Caco-2 (cell line): ENCODE measurements at regions of chr4 and their contacts with region 1.

Region 1: GRCh38 chr4:37542706-37543105 is 143.5 kb downstream of the RELL1 start:
- DNase-seq: no peak
- H3K4me3 ChIP-seq: no peak overlapping the region
- H3K4me3 Mint-ChIP-seq: peak overlapping the region; percentile 3
- H3K27ac Mint-ChIP-seq: peak overlapping the region; percentile 13
- H3K4me1 ChIP-seq: peaks cover 60% of the 10 kb centered on the region
- H3K4me1 Mint-ChIP-seq: peaks cover 33% of the 10 kb centered on the region
- H3K27me3 ChIP-seq: no peaks in the 10 kb centered on the region
- H3K27me3 Mint-ChIP-seq: no peaks in the 10 kb centered on the region
- CTCF ChIP-seq: no peak

Region 2: DNA sequence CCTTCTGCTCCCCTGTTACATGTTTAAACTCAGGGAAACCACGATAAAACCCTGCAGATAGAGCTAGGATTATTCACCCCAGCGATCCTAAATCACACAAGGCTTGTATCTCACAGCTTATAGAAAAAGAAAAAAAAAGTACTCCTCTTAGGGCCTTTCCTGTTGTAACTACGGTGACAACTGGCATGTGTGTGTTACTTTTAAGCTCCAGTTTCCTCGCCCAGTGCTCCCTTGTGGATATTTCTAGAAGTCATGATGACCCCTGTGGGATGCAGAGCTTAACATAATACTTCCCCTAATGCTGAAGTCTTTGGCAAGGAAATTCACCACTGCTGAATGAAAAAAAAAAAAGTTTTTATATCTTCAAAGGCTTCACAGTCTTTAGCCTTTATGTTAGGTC is 183.4 kb before region 1 on chr4:
- CTCF ChIA-PET with region 1: no interaction called
- POLR2A ChIA-PET with region 1: no interaction called
- intact Hi-C with region 1: no loop called
- DNase-seq: no peak
- H3K4me3 ChIP-seq: no peak overlapping the region
- H3K4me3 Mint-ChIP-seq: no peak overlapping the region
- H3K27ac Mint-ChIP-seq: no peak overlapping the region
- H3K4me1 ChIP-seq: no peaks in the 10 kb centered on the region
- H3K4me1 Mint-ChIP-seq: peaks cover 11% of the 10 kb centered on the region
- H3K27me3 ChIP-seq: no peaks in the 10 kb centered on the region
- H3K27me3 Mint-ChIP-seq: no peaks in the 10 kb centered on the region
- CTCF ChIP-seq: no peak

Region 3: GRCh38 chr4:37434469-37434868 is 108.2 kb before region 1 on chr4:
- CTCF ChIA-PET with region 1: no interaction called
- POLR2A ChIA-PET with region 1: no interaction called
- intact Hi-C with region 1: no loop called
- DNase-seq: peak in 1 of 2 experiments; percentile 33
- H3K4me3 ChIP-seq: no peak overlapping the region
- H3K4me3 Mint-ChIP-seq: no peak overlapping the region
- H3K27ac Mint-ChIP-seq: no peak overlapping the region
- H3K4me1 ChIP-seq: peaks cover 58% of the 10 kb centered on the region
- H3K4me1 Mint-ChIP-seq: peaks cover 37% of the 10 kb centered on the region
- H3K27me3 ChIP-seq: no peaks in the 10 kb centered on the region
- H3K27me3 Mint-ChIP-seq: no peaks in the 10 kb centered on the region
- CTCF ChIP-seq: peak in 1 of 2 experiments; percentile 31

Region 4: DNA sequence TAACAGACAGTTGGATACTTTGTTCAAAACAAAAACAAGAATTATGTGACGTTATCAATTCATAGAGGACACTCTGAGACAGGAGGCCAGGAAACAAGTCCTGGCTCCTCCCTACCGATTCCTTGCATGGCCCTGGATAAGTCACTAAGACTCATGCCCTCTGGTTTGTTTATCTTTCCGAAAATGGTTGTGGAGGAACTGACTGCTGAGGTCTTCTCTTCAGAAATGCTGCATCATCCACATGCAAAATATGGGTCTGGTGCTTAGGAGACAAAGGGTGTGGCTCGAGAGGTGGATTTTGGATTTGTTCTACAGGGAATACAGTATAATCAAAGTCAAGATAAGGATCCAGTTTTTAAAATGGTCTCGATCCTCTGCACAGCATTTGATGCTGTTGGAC is 12.6 kb after region 1 on chr4:
- CTCF ChIA-PET with region 1: no interaction called
- POLR2A ChIA-PET with region 1: no interaction called
- intact Hi-C with region 1: no loop called
- DNase-seq: no peak
- H3K4me3 ChIP-seq: no peak overlapping the region
- H3K4me3 Mint-ChIP-seq: no peak overlapping the region
- H3K27ac Mint-ChIP-seq: no peak overlapping the region
- H3K4me1 ChIP-seq: peaks cover 3% of the 10 kb centered on the region; the same call in 1 of the 2 replicates
- H3K4me1 Mint-ChIP-seq: no peaks in the 10 kb centered on the region
- H3K27me3 ChIP-seq: no peaks in the 10 kb centered on the region
- H3K27me3 Mint-ChIP-seq: no peaks in the 10 kb centered on the region
- CTCF ChIP-seq: no peak

Region 5: DNA sequence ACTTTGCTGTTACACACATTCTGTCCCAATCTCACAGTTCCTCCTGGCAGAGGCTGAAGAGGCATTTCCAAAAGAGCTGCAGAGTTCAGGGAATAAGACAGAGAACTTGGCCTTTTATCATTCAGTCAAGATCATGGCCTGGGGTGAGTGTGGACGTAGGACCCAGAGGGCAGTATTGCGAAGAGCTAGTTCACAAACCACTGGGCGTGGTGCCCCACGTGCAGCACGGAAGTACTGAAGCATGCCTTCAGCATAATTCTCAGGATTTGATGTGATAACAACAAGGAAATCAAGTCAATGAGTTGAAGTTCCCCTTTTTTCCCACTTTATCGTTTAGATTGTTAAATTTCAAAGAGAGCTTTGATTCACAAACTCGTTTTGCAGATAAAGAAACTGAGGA is 25.8 kb after region 1 on chr4:
- CTCF ChIA-PET with region 1: no interaction called
- POLR2A ChIA-PET with region 1: no interaction called
- intact Hi-C with region 1: loop called (anchors 2 kb)
- DNase-seq: no peak
- H3K4me3 ChIP-seq: no peak overlapping the region
- H3K4me3 Mint-ChIP-seq: no peak overlapping the region
- H3K27ac Mint-ChIP-seq: no peak overlapping the region
- H3K4me1 ChIP-seq: no peaks in the 10 kb centered on the region
- H3K4me1 Mint-ChIP-seq: peaks cover 12% of the 10 kb centered on the region
- H3K27me3 ChIP-seq: no peaks in the 10 kb centered on the region
- H3K27me3 Mint-ChIP-seq: no peaks in the 10 kb centered on the region
- CTCF ChIP-seq: no peak

Region 6: DNA sequence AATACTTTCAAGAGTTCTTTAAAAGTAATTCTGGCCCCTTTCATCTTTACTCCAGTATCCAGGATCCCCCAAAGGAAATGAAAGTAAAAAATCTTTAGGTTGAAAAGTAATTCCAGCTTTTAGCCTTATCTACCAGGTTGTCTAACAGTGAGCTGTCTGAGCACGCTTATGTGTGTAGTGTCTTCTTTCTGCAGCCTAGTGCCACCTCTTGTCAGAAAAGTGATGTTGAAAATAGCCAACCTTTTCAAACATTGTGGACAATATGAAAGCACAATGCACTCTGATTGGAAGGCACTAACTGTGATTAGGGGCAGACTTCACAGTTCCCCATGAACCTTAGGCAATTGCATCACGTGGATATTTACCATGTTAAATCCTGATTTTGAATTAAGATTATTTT is 51.4 kb after region 1 on chr4:
- CTCF ChIA-PET with region 1: interaction called, 3 read pairs
- POLR2A ChIA-PET with region 1: no interaction called
- intact Hi-C with region 1: loop called (anchors 1 kb)
- DNase-seq: no peak
- H3K4me3 ChIP-seq: no peak overlapping the region
- H3K4me3 Mint-ChIP-seq: no peak overlapping the region
- H3K27ac Mint-ChIP-seq: no peak overlapping the region
- H3K4me1 ChIP-seq: peaks cover 39% of the 10 kb centered on the region
- H3K4me1 Mint-ChIP-seq: peaks cover 26% of the 10 kb centered on the region
- H3K27me3 ChIP-seq: no peaks in the 10 kb centered on the region
- H3K27me3 Mint-ChIP-seq: no peaks in the 10 kb centered on the region
- CTCF ChIP-seq: peak in 1 of 2 experiments; percentile 19